ENCODE measurements at regions of chr1 and their contacts with region 1.

Region 1: DNA sequence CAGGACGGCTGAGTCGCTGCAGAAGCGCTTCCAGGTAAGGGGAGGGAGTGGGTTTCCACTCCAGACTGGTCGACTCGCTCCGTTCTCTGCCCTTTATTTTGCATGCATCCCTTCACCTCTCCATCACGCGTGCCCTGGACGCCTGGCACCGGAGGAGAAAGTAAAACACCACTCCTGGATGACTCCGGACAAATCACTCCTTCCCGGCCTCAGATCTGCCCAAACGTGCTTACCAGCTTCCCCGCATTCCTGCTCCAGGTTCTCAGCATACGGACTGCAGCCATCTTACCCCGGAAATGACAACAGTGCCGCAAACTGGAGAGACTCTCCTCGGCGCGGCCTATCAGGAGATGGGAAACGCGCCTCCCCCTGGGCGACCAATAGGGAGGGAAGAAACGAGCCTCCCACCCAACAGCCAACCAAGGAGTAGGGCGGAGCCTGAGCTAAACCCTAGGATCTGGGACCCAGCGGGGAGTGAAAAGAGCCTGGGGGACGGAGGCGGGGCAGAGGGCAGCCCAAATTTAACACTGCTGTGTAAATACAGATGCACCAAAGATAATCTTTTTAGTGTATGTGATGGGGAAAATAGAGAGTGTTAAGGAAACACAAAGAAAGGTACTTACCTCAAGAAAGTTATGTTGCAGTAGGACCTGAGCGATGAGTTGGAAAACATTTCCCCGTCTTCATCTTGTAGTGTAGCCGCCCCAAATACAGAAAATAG is at the start of gene DBT:
- DNase-seq: peak; percentile 77
- ATAC-seq: peak; percentile 100
- H3K4me3 Mint-ChIP-seq: no peak within 1 kb of the TSS
- H3K27ac Mint-ChIP-seq: no peak within 1 kb of the TSS
- H3K4me1 Mint-ChIP-seq: peaks cover 7% of the 10 kb centered on the region
- H3K27me3 Mint-ChIP-seq: no peaks in the 10 kb centered on the region
- CTCF ChIP-seq: no peak
- total RNA-seq, gene DBT: 9.8 and 11.6 TPM in 2 replicates

Region 2: DNA sequence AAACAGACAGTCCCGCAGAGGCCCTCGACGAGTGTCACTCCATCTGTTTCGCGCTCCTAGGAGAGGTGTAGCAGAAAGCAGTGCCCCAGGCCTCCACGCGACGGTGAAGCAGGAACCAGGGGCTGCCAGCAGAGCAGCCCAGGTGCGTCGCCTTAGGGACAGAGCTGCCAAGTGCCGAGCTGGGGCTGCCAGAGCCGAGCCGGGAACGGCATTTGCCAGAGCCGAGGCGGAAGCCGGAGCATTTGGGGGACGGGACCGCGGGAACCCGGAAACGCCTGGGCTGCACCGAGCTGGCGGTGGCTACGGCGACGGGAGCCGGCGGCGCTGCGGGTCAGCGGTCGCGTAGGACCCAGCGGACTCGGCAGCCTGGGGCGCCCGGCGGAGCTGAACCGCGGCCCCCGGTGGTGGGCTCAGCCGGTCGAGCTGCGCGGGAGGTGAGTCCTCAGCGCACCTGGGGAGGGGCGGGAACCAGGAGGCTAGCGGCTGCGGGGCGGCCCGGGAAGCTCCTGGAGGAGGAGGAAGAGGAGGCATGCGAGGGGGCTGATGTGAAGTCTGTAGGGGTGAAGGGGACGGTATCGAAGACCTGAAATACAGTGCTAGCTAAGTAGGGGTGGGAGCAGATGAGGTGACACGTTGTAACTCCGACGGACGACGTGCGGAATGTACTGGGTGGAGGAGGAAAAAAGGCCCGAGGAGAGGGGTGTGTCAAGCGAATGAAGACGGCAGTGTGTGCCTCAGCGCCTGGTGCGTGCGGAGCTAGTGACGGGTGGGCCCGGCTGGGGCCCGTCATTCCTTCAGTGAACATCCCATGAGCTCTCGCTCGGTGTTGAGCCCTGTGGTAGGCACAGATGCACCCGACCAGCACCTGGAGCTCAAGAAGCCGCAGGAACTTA is 279.7 kb before region 1 on chr1 and contains the start of gene SLC35A3:
- CTCF ChIA-PET with region 1: no interaction called
- POLR2A ChIA-PET with region 1: interaction called, 6 read pairs
- intact Hi-C with region 1: loop called (anchors 5 kb)
- DNase-seq: peak; percentile 73
- ATAC-seq: peak; percentile 83
- H3K4me3 Mint-ChIP-seq: peak within 1 kb of the TSS; percentile 100
- H3K27ac Mint-ChIP-seq: peak within 1 kb of the TSS; percentile 95
- H3K4me1 Mint-ChIP-seq: peaks cover 27% of the 10 kb centered on the region
- H3K27me3 Mint-ChIP-seq: no peaks in the 10 kb centered on the region
- CTCF ChIP-seq: no peak
- total RNA-seq, gene SLC35A3: 18.3 and 21.1 TPM in 2 replicates

Region 3: DNA sequence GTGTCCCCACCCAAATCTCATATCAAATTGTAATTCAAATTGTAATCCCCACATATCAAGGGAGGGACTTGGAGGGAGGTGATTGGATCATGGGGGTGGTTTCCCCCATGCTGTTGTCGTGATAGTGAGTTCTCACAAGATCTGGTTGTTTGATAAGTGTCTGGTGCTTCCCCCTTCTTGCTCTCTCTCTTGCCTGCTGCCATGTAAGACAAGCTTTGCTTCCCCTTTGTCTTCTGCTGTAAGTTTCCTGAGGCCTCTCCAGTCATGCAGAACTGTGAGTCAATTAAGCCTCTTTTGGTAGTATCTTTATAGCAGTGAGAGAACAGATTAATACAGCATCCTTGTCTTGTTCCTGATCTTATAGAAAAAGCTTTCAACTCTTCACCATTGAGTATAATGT is 65.2 kb before region 1 on chr1:
- CTCF ChIA-PET with region 1: no interaction called
- POLR2A ChIA-PET with region 1: no interaction called
- intact Hi-C with region 1: loop called (anchors 1 kb)
- DNase-seq: no peak
- ATAC-seq: peak; percentile 99
- H3K4me3 Mint-ChIP-seq: no peak overlapping the region
- H3K27ac Mint-ChIP-seq: peak overlapping the region; percentile 75
- H3K4me1 Mint-ChIP-seq: peaks cover 15% of the 10 kb centered on the region
- H3K27me3 Mint-ChIP-seq: no peaks in the 10 kb centered on the region
- CTCF ChIP-seq: no peak

Region 4: DNA sequence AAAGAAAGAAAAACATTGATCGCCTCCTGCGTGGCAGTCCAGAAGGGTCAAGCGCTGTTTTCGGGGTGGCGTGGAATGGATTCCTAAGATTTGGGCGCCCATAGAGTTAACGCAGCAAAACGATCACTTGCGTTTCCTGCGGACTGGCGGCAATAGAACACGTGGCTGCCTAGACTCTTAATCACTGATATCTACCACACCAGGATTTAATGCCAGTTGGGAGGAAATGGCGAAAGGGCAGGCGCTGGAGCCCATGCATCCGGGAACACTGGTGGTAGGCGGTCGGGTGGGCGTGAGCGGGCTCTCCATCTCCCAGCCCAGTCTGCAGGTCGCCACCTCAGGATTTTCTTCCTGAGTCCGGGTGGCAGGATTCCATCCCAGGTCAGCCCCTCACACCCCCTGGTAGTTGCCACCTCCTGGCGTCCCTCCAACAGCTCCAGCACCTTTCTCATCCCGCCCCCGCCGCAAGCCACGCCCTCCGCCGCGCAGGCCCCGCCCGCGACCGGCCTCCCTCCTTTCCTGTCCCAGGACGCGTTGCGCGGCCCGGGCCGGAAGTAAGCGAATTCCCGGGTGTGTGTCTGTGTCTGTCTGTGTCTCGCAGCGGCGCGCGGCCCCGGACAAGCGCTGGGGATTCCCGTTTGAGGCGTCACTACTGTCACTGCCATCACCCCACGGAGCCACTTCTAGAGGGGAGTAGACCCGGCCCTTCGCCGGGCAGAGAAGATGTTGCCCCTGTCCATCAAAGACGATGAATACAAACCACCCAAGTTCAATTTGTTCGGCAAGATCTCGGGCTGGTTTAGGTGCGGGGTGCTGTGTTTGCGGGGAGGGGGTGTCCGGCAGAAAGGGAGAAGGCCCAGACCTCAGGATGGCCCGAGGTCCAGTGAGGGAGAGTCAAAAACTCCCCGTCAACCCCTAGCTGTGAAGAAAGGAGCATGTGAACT is 646.1 kb after region 1 on chr1 and contains the start of gene SLC30A7:
- CTCF ChIA-PET with region 1: no interaction called
- POLR2A ChIA-PET with region 1: interaction called, 3 read pairs
- intact Hi-C with region 1: loop called (anchors 5 kb)
- DNase-seq: peak; percentile 97
- ATAC-seq: peak; percentile 86
- H3K4me3 Mint-ChIP-seq: peak within 1 kb of the TSS; percentile 98
- H3K27ac Mint-ChIP-seq: peak within 1 kb of the TSS; percentile 95
- H3K4me1 Mint-ChIP-seq: peaks cover 29% of the 10 kb centered on the region
- H3K27me3 Mint-ChIP-seq: no peaks in the 10 kb centered on the region
- CTCF ChIP-seq: no peak
- total RNA-seq, gene SLC30A7: 21.1 and 25.7 TPM in 2 replicates